Naive thymus-derived CD4-positive, alpha-beta T cell (primary cell): ENCODE measurements at regions of chr6 and their contacts with region 1.

Region 1: GRCh38 chr6:158972241-158973233 is 27.5 kb downstream of the RSPH3 start:
- DNase-seq: peak in 6 of 9 donors; percentile 41 to 68 (median 60)
- ATAC-seq: peak; percentile 75
- H3K4me3 ChIP-seq: no peak overlapping the region
- H3K4me3 Mint-ChIP-seq: no peak overlapping the region
- H3K27ac ChIP-seq: no peak overlapping the region
- H3K27ac Mint-ChIP-seq: no peak overlapping the region
- H3K4me1 ChIP-seq: no peaks in the 10 kb centered on the region
- H3K4me1 Mint-ChIP-seq: peaks cover 0 to 6% (median 0%) of the 10 kb centered on the region in 7 donors
- H3K27me3 ChIP-seq: no peaks in the 10 kb centered on the region
- H3K27me3 Mint-ChIP-seq: peaks cover 0 to 6% (median 0%) of the 10 kb centered on the region in 5 donors

Region 2: DNA sequence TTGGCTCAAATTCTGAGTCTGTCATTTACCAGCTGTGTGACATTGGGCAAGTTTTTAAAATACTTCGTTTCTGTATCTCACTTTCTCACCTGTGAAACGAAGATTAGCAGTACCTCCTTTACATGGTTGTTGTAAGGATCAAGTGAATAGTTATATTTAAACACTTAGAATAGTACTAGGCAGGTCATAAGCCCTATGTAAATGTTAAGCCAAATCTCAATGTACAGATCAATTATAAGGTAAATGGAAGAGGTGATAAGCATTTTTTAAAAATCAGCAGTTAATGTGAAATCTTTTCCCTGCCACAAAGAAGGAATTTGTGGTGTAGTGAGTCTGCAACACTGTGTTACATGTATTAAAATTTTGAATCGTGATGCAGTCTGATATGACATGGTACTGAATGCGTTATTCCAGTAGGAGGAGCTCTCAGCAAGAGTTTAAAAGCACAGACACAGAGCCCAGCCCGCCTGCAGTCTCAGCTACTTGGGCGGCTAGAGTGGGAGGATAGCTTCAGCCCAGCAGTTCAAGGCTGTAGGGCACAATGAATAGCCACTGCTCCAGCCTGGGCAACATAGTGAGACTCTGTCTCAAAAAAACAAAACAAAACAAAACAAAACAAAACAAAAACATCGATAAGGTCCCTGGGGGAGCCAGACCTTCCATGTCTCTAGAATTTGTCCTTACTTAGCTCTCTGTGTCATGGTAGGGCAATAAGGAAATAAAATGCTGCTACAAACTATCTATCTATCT is 758.4 kb before region 1 on chr6:
- CTCF ChIA-PET with region 1: interaction called, 5 read pairs
- POLR2A ChIA-PET with region 1: no interaction called
- intact Hi-C with region 1: loop called (anchors 5 kb)
- DNase-seq: peak; percentile 18 to 62 (median 49)
- ATAC-seq: peak; percentile 96
- H3K4me3 ChIP-seq: no peak overlapping the region
- H3K4me3 Mint-ChIP-seq: no peak overlapping the region
- H3K27ac ChIP-seq: no peak overlapping the region
- H3K27ac Mint-ChIP-seq: no peak overlapping the region
- H3K4me1 ChIP-seq: no peaks in the 10 kb centered on the region
- H3K4me1 Mint-ChIP-seq: peaks cover under 1 to 16% (median 2%) of the 10 kb centered on the region in 7 donors
- H3K27me3 ChIP-seq: no peaks in the 10 kb centered on the region
- H3K27me3 Mint-ChIP-seq: peaks cover 0 to 2% (median 0%) of the 10 kb centered on the region in 5 donors

Region 3: DNA sequence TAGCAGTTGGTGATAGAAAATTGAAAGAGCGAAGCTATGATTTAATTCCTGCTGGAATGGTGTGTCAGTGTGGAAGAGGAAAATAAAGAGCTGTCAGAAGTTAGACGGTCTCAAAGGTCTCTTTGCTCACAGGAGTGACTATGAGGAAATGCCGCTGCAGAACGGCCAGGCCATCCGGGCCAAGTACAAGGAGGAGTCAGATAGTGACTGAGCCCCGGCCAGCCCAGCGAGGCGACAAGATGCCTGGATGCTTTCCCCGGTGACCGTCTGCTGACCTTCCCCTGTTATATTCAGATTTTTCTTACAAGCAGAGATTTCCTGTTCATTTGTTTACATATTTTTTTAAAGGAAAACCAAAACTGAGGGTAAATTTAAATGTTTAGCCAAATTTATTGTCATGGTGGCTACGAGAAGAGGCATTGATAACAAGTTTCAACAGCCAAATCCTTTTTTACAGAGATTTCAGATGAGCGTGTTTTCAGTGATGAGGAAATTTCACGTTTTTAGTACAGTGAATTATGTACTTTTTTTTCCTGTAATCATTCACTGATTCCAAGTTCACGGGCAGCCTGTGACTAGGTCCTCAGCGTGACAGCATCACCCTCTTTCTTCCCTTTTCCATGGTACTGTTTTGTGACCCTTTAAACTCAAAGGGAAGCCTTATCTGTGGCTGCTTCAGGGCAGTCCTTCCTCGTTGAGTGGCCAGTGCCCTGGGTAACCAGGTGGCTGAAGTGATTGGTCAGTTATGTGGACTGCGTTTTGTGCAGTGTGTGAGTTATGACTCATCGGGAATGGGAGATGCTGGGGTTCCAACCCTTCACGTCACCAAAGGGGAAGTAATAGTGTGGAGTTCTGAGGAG is 340.6 kb before region 1 on chr6:
- CTCF ChIA-PET with region 1: no interaction called
- POLR2A ChIA-PET with region 1: no interaction called
- intact Hi-C with region 1: loop called in 1 of 2 experiments (anchors 1 kb)
- DNase-seq: no peak
- ATAC-seq: peak; percentile 47
- H3K4me3 ChIP-seq: no peak overlapping the region
- H3K4me3 Mint-ChIP-seq: no peak overlapping the region
- H3K27ac ChIP-seq: peak overlapping the region; percentile 49
- H3K27ac Mint-ChIP-seq: peak overlapping the region; percentile 52 to 91 (median 83)
- H3K4me1 ChIP-seq: peaks cover 15 to 16% of the 10 kb centered on the region in 2 donors
- H3K4me1 Mint-ChIP-seq: peaks cover 21 to 61% (median 48%) of the 10 kb centered on the region in 7 donors
- H3K27me3 ChIP-seq: no peaks in the 10 kb centered on the region
- H3K27me3 Mint-ChIP-seq: no peaks in the 10 kb centered on the region

Region 4: DNA sequence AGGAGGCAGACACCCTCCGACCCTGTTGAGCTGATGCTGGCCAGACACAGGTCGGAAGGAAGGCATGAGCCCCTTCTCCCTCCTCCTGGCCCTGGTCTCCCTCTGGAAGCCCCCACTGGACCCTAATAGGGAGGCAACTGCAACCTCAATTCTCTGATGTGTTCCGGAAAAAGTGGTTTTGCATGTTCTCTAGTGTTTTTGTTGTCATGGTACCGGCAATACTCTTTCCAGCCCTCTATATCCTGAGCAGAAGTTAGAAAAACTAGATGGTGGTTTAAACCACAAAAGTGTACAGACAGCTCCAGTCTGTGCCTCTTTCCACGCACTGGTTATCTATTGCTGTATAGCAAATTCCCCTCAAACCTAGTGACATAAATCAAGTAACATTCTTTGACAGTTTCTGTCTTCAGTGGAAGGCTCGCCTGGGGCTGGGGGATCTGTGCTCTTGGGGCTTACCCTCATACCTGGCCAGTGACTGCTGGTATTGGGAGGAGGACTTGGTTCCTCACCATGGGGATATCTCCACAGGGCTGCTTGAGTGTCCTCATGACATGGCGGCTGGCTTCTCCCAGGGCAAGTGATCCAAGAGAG is 285.7 kb before region 1 on chr6:
- CTCF ChIA-PET with region 1: interaction called, 10 read pairs
- POLR2A ChIA-PET with region 1: no interaction called
- intact Hi-C with region 1: no loop called
- DNase-seq: peak; percentile 29 to 92 (median 87)
- ATAC-seq: peak; percentile 96
- H3K4me3 ChIP-seq: peak overlapping the region; percentile 31
- H3K4me3 Mint-ChIP-seq: peak overlapping the region; percentile 66 to 91 (median 79)
- H3K27ac ChIP-seq: peak overlapping the region; percentile 82
- H3K27ac Mint-ChIP-seq: peak overlapping the region; percentile 88 to 100 (median 98)
- H3K4me1 ChIP-seq: peaks cover 28 to 49% of the 10 kb centered on the region in 2 donors
- H3K4me1 Mint-ChIP-seq: peaks cover 36 to 76% (median 70%) of the 10 kb centered on the region in 7 donors
- H3K27me3 ChIP-seq: no peaks in the 10 kb centered on the region
- H3K27me3 Mint-ChIP-seq: no peaks in the 10 kb centered on the region

Region 5: DNA sequence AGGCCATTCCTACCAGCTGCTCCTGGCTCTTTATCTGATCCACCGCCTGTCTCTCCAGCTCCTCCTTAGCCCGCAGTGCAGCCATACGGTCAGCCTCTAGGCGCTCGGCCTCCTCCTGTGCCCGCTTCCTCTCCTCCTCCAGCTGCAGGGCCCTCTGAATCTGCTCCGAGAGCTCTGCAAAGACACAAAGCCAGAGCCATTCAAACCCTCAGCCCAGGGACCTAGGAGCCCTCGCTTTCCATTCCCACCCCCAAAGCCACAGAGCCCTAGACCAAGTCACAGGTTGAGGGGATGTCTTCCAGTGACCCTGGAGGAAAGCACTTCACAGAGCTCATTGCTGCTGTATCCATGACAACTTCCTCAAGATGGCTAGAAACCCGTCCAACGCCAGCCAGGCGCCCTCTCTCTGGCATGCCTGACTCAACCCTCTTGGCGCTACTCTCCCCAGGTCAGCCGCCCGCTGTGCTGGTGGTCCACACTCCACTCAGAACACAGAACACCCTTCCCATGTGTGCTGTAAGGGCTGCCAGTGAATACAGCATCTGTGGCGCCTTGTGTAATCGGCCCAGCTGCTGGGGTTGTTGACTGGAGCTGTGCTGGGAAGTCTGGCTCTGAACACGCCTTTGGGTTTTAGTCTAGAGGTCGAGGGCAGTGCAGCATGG is 202.6 kb before region 1 on chr6:
- CTCF ChIA-PET with region 1: interaction called, 4 read pairs
- POLR2A ChIA-PET with region 1: interaction called, 3 read pairs
- intact Hi-C with region 1: loop called in 1 of 2 experiments (anchors 5 kb)
- DNase-seq: no peak
- ATAC-seq: no peak
- H3K4me3 ChIP-seq: no peak overlapping the region
- H3K4me3 Mint-ChIP-seq: peak overlapping the region in 3 of 10 donors; percentile 12 to 70 (median 18)
- H3K27ac ChIP-seq: peak overlapping the region; percentile 51
- H3K27ac Mint-ChIP-seq: peak overlapping the region; percentile 25 to 93 (median 87)
- H3K4me1 ChIP-seq: peaks cover 19 to 37% of the 10 kb centered on the region in 2 donors
- H3K4me1 Mint-ChIP-seq: peaks cover 29 to 53% (median 43%) of the 10 kb centered on the region in 7 donors
- H3K27me3 ChIP-seq: no peaks in the 10 kb centered on the region
- H3K27me3 Mint-ChIP-seq: no peaks in the 10 kb centered on the region

Region 6: DNA sequence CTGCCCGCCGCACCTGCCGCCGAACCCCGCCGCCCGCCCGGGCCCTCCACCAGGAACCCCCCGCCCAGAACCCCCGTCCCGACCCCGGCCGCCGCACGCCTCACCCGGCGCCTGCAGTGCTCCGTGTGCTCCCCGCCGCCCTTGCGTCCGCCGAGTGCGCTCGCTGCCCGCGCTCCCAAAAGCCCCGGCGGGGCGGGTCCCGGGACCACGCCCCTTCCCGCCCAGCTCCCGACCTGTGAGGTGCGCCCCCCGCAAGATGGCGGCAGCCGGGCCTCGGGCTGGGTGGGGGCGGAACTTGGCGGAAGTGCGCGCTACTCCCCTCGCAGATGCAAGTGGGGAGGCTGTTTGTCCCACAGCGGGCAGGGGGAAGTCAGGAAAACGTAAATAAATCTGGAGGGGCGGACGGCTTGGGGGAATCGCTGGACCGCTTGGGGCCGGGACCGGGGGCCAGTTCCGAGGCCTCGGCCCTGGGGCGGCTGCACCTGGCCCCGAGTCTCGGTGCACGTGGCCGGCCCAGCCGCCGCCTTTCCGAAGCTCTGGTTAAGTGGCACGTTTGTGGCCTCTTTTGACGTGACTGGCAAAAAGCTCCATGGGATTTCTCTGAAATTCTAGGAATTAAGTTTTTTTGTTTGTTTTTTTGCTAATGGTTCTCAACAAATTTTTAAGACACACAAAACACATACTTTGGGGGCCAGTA is 153.2 kb before region 1 on chr6 and contains the start of gene EZR:
- CTCF ChIA-PET with region 1: no interaction called
- POLR2A ChIA-PET with region 1: no interaction called
- intact Hi-C with region 1: loop called in 1 of 2 experiments (anchors 1 kb)
- DNase-seq: peak; percentile 70 to 85 (median 80)
- ATAC-seq: peak; percentile 80
- H3K4me3 ChIP-seq: peak within 1 kb of the TSS; percentile 50
- H3K4me3 Mint-ChIP-seq: peak within 1 kb of the TSS; percentile 81 to 97 (median 90)
- H3K27ac ChIP-seq: peak within 1 kb of the TSS; percentile 99
- H3K27ac Mint-ChIP-seq: peak within 1 kb of the TSS; percentile 89 to 97 (median 91)
- H3K4me1 ChIP-seq: peaks cover 21 to 24% of the 10 kb centered on the region in 2 donors
- H3K4me1 Mint-ChIP-seq: peaks cover 30 to 47% (median 36%) of the 10 kb centered on the region in 7 donors
- H3K27me3 ChIP-seq: no peaks in the 10 kb centered on the region
- H3K27me3 Mint-ChIP-seq: no peaks in the 10 kb centered on the region
- total RNA-seq, gene EZR: 132 to 201 (median 163) TPM